ENCODE measurements at regions of chr16 and their contacts with region 1.

Region 1: GRCh38 chr16:82263521-82264143 is 93.6 kb upstream of the MPHOSPH6 start:
- DNase-seq: peak; percentile 36
- ATAC-seq: peak; percentile 84
- H3K4me3 ChIP-seq: no peak overlapping the region
- H3K27ac ChIP-seq: no peak overlapping the region
- H3K4me1 ChIP-seq: no peaks in the 10 kb centered on the region
- H3K27me3 ChIP-seq: peaks cover 4% of the 10 kb centered on the region; the same call in 1 of the 2 replicates
- CTCF ChIP-seq: peak; percentile 84

Region 2: GRCh38 chr16:82384017-82384416 is 120.4 kb after region 1 on chr16:
- CTCF ChIA-PET with region 1: no interaction called
- POLR2A ChIA-PET with region 1: no interaction called
- in situ Hi-C with region 1: no loop called
- intact Hi-C with region 1: no loop called
- DNase-seq: no peak
- ATAC-seq: no peak
- H3K4me3 ChIP-seq: no peak overlapping the region
- H3K27ac ChIP-seq: no peak overlapping the region
- H3K4me1 ChIP-seq: no peaks in the 10 kb centered on the region
- H3K27me3 ChIP-seq: no peaks in the 10 kb centered on the region; the same call in 1 of the 2 replicates
- CTCF ChIP-seq: no peak

Region 3: DNA sequence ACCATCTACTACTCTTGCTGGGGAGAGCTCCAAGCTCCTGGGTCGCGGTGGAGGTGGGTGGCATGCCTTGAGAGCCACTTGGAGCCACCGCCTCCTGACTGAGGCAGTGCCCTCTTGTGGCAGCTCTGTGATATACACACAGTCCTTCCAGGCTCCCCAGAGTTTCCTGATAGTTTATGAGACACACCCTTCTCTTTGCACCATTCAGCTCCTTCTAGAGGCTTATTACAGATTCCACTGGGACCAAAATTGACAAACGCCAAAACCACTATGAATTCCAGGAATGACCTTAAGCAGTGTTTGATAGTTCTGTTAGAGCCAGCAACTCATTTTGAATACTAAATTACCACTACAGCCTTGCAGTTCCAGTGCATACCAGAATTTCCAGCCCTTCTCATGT is 193.1 kb after region 1 on chr16:
- CTCF ChIA-PET with region 1: interaction called, 6 read pairs
- POLR2A ChIA-PET with region 1: no interaction called
- in situ Hi-C with region 1: no loop called
- intact Hi-C with region 1: loop called (anchors 5 kb)
- DNase-seq: peak; percentile 24
- ATAC-seq: peak; percentile 65
- H3K4me3 ChIP-seq: no peak overlapping the region
- H3K27ac ChIP-seq: no peak overlapping the region
- H3K4me1 ChIP-seq: no peaks in the 10 kb centered on the region
- H3K27me3 ChIP-seq: no peaks in the 10 kb centered on the region; the same call in 1 of the 2 replicates
- CTCF ChIP-seq: peak; percentile 79

Region 4: GRCh38 chr16:82580298-82580890 is 316.8 kb after region 1 on chr16:
- CTCF ChIA-PET with region 1: no interaction called
- POLR2A ChIA-PET with region 1: no interaction called
- in situ Hi-C with region 1: no loop called
- intact Hi-C with region 1: loop called (anchors 10 kb)
- DNase-seq: no peak
- ATAC-seq: no peak
- H3K4me3 ChIP-seq: no peak overlapping the region
- H3K27ac ChIP-seq: no peak overlapping the region
- H3K4me1 ChIP-seq: no peaks in the 10 kb centered on the region
- H3K27me3 ChIP-seq: no peaks in the 10 kb centered on the region
- CTCF ChIP-seq: peak; percentile 47

Region 5: DNA sequence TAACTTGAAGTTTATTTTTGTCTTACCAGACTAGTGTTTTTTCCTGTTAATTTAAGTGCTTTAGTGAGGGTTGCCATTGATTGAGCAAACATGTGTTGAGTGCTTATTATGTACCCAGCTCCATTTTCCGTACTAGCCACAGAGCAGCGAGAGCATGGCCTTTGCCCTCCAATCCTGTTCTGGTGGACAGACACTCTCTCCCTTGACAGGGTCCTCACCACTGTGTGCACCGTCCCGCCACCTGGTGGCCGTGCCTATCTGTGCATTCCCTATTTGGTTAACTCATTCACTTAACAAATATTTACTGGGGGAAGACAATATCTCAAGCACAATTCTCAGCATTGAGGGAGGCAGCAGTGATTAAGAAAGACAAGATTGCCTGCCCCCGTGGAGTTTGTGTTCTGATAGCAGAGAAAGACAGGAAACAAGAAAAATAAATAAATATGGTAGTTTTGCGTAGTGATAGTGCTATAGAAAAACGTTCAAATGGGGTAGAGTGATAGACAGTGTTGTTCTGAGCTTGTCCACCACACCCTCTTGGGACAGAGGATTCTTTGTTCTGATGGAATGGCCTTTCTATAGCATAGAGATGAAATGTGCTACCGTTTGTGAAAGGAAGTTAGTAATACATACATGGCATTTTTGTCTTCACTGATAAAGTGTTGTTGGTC is 376.2 kb after region 1 on chr16:
- CTCF ChIA-PET with region 1: no interaction called
- POLR2A ChIA-PET with region 1: no interaction called
- in situ Hi-C with region 1: no loop called
- intact Hi-C with region 1: loop called (anchors 10 kb)
- DNase-seq: no peak
- ATAC-seq: no peak
- H3K4me3 ChIP-seq: no peak overlapping the region
- H3K27ac ChIP-seq: no peak overlapping the region
- H3K4me1 ChIP-seq: no peaks in the 10 kb centered on the region
- H3K27me3 ChIP-seq: no peaks in the 10 kb centered on the region
- CTCF ChIP-seq: peak; percentile 74

Region 6: DNA sequence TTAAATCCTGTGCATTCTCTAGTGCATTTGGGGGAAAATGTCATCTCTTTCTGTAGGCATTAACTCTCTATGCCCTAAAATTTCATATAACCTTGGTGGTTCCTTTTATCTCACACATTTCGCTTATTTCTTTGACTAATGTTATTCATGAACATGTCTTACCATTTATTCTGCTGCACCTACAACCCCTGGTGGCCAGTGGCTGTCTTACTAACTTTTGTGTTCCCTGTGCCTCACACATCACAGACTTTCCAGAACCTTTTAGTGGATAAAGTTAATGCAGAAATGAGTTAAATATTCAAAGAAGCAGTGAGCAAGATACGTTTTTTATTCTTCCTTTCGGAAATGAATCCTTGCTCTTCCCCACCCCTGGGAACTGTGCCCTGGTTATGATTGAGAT is 475.1 kb after region 1 on chr16:
- CTCF ChIA-PET with region 1: no interaction called
- POLR2A ChIA-PET with region 1: no interaction called
- in situ Hi-C with region 1: no loop called
- intact Hi-C with region 1: loop called (anchors 10 kb)
- DNase-seq: no peak
- ATAC-seq: no peak
- H3K4me3 ChIP-seq: no peak overlapping the region
- H3K27ac ChIP-seq: no peak overlapping the region
- H3K4me1 ChIP-seq: no peaks in the 10 kb centered on the region
- H3K27me3 ChIP-seq: no peaks in the 10 kb centered on the region
- CTCF ChIP-seq: no peak

Region 7: DNA sequence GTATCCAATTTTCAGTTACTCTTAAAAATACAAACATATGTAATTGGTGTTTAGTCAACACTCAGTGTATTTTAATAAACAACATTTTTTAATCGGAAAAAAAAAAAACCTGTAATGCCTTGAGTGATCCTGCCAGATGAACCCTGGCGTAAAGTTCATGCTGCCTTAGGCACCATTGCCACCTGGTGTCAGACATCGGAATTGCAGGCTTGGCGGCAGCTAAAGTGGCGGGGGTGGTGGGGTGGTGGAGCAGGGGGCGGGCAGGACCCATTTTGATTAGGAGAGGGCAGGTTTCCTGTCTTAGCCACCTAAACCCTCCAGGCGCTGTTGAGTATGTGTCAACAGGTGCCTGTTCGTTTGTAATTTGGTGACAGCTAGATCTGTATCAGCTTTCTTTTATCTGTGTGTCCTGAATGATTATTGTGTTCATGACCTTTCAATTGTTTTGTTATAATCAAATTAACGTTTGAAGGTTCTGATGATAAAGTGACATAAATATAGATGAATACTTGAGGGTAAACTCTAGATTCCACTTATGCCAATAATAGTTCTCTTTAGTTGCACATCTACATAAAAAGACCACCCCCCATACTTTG is 951.9 kb after region 1 on chr16:
- CTCF ChIA-PET with region 1: no interaction called
- POLR2A ChIA-PET with region 1: no interaction called
- in situ Hi-C with region 1: no loop called
- intact Hi-C with region 1: loop called (anchors 1 kb)
- DNase-seq: peak; percentile 10
- ATAC-seq: peak; percentile 63; the same call in 1 of the 2 replicates
- H3K4me3 ChIP-seq: no peak overlapping the region
- H3K27ac ChIP-seq: no peak overlapping the region
- H3K4me1 ChIP-seq: no peaks in the 10 kb centered on the region
- H3K27me3 ChIP-seq: no peaks in the 10 kb centered on the region
- CTCF ChIP-seq: peak; percentile 90

Measured in Panc1 (cell line).